Activated T-helper 1 cell treated with anti-CD3 and anti-CD28 coated beads, Interleukin-12 subunit alpha, Interleukin-12 subunit beta, Interleukin-2, Interleukin-4 antibody, amounts not matched to agents 30 ng/mL and 10 ng/mL and 1 ng/mL, durations not matched to agents 14 hours and 24 hours and 36 hours (primary cell): ENCODE measurements at regions of chr6 and their contacts with region 1.

Region 1: DNA sequence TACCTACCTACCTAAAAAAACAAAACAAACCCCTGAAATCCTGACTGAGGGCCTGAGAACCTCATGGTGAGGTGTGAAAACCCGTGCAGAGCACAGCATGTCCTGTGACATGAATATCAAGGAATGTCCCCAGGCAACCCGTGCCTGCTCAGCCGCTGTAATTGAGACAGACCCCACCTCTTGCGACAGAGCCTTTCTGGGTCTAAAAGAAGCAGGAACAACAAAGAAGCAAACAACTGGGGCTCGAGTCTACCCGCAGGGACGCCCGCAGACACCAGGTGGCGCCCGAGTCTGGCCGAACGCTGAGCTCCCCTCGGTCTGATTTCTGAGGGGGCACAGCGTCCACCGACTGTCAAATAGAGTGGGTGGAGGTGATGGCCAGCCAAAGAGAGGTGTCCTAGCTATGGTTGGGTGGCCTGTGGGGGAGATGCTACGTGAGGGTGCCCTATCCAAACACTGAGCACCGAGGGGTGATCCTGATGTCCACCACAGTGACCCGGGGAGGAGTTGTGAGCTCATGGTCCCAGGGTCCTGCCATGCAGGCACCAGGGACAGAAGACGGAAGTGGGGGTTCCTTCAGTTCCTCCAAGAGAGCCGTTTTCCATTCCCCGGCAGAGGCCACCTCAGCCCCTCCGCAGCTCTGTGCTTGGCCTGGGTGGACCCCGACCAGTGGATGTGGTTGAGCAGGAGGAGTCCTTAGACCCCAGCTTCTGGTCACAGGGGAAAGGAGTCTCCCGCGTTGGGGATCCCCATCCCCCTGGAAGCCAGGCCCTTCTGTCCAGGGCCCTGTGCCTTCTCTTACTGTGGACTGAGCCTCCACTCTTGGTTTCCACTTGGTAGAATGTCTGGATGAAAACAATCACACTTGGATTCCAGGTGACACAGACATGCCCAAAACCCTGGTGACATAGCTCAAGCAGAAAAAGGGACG is 268.2 kb downstream of the CDC5L start:
- DNase-seq: peak; percentile 47
- H3K4me3 Mint-ChIP-seq: no peak overlapping the region
- H3K27ac Mint-ChIP-seq: peak overlapping the region; percentile 8
- H3K4me1 Mint-ChIP-seq: peaks cover 8% of the 10 kb centered on the region
- H3K27me3 Mint-ChIP-seq: peaks cover 4% of the 10 kb centered on the region

Region 2: DNA sequence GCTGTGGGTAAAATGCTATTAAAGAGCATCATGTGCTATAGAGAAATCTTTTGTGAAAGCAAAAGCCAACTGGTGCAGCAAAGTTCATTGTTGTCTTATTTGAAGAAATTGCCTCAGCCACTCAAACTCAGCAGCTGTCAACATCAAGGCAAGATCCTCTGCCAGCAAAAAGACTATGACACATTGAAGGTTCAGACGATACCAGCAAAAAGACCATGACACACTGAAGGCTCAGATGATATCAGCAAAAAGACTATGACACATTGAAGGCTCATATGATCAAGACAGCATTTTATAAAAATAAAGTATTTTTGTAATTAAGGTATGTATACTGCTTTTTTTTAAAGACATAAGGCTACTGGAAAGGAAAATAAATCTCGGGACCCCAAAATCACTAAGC is 554.1 kb after region 1 on chr6:
- intact Hi-C with region 1: loop called (anchors 5 kb)
- DNase-seq: no peak
- H3K4me3 Mint-ChIP-seq: no peak overlapping the region
- H3K27ac Mint-ChIP-seq: no peak overlapping the region
- H3K4me1 Mint-ChIP-seq: peaks cover 35% of the 10 kb centered on the region
- H3K27me3 Mint-ChIP-seq: no peaks in the 10 kb centered on the region